HEK293 (cell line): ENCODE measurements at regions of chr12 and their contacts with region 1.

Region 1: DNA sequence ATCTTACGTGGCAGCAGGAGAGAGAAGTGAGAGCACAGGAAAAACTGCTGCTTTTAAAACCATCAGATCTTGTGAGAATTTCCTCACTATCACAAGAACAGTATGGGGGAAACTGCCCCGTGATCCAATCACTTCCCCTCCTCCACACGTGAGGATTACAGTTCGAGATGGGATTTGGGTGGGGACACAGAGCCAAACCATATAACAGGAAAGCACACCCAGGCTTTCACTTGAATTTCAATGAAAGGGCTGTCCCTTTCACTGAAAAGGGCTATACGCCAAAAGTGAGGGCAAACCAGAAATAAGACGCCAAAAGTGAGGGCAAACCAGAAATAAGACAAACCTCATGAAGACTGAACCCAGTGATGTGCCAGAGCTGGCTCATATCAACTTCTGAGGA is 22.8 kb upstream of the TMEM233 start:
- H3K4me3 ChIP-seq: no peak overlapping the region
- H3K27ac ChIP-seq: no peak overlapping the region
- H3K4me1 ChIP-seq: no peaks in the 10 kb centered on the region
- CTCF ChIP-seq: no peak

Region 2: GRCh38 chr12:119642986-119643385 is 72.2 kb after region 1 on chr12:
- CTCF ChIA-PET with region 1: interaction called, 11 read pairs
- POLR2A ChIA-PET with region 1: no interaction called
- H3K4me3 ChIP-seq: no peak overlapping the region
- H3K27ac ChIP-seq: no peak overlapping the region
- H3K4me1 ChIP-seq: no peaks in the 10 kb centered on the region
- CTCF ChIP-seq: no peak

Region 3: GRCh38 chr12:119667577-119668323 is 97.0 kb after region 1 on chr12 and contains the start of gene PRKAB1:
- CTCF ChIA-PET with region 1: no interaction called
- POLR2A ChIA-PET with region 1: no interaction called
- H3K4me3 ChIP-seq: peak within 1 kb of the TSS; percentile 73
- H3K27ac ChIP-seq: peak within 1 kb of the TSS; percentile 94
- H3K4me1 ChIP-seq: no peaks in the 10 kb centered on the region
- CTCF ChIP-seq: peak; percentile 95